HCT116 (cell line): ENCODE measurements at regions of chr6 and their contacts with region 1.

Region 1: GRCh38 chr6:142474531-142475289 is 172.9 kb downstream of the ADGRG6 start:
- DNase-seq: peak; percentile 77
- ATAC-seq: peak; percentile 94
- H3K4me3 ChIP-seq: peak overlapping the region in 1 of 2 experiments; percentile 19; a peak in 1 of 4 replicates
- H3K27ac ChIP-seq: 0 out of 2 replicates have a peak overlapping the region, but pooled peaks have one; percentile 10
- H3K4me1 ChIP-seq: peaks cover 0 to 9% of the 10 kb centered on the region in 2 experiments; a peak in 2 of 4 replicates
- H3K27me3 ChIP-seq: no peaks in the 10 kb centered on the region
- CTCF ChIP-seq: peak; percentile 52 to 89 (median 83)
- POLR2A ChIP-seq: no peak
- RAD21 ChIP-seq: peak; percentile 83

Region 2: DNA sequence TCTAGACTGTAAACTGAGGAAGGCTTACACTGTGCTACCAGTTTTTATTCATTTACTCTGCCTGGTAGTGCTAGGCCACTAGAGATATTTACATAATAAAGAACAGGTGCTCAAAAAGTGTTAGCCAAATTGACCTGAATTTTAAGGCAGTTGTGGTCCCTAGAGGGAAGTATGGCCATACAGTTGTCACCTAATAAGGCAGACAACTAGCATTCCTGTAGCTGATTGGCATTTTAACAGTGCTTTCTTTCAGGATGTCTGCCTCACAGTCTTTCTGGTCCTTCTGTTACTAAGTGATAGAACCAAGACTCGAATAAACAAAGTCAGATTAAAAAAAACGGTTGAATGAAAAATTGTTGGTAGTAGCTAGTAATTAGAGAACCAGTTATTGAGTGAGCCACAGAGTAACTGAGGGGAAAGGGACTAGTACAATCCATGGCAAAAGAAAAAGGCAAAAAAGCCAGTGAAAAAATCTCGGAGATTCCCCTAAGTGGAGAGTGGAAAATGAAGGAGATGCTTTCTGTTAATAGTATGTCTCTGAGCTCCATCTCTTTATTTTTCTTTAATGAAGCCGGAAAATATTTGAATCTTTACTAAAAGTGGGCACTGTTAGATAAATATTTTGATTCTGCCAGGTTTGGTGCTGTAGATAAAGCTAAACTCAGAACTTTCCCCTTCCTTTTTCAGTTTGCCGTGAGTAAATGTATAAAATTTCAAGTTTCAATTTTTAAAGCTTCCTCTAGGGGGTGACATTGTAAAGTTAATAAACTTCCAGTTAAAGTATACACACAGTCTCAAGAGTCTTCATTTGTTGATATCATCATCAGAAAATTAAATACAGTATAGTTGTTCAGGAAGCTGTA is 318.6 kb before region 1 on chr6:
- CTCF ChIA-PET with region 1: interaction called, 21 read pairs
- POLR2A ChIA-PET with region 1: no interaction called
- RAD21 ChIA-PET with region 1: no interaction called
- intact Hi-C with region 1: loop called (anchors 5 kb)
- DNase-seq: peak; percentile 2
- ATAC-seq: peak; percentile 62; the same call in 1 of the 2 replicates
- H3K4me3 ChIP-seq: no peak overlapping the region
- H3K27ac ChIP-seq: no peak overlapping the region
- H3K4me1 ChIP-seq: no peaks in the 10 kb centered on the region
- H3K27me3 ChIP-seq: no peaks in the 10 kb centered on the region
- CTCF ChIP-seq: peak in 2 of 3 experiments; percentile 50 to 58; a peak in 3 of 6 replicates
- POLR2A ChIP-seq: no peak
- RAD21 ChIP-seq: peak; percentile 57

Region 3: DNA sequence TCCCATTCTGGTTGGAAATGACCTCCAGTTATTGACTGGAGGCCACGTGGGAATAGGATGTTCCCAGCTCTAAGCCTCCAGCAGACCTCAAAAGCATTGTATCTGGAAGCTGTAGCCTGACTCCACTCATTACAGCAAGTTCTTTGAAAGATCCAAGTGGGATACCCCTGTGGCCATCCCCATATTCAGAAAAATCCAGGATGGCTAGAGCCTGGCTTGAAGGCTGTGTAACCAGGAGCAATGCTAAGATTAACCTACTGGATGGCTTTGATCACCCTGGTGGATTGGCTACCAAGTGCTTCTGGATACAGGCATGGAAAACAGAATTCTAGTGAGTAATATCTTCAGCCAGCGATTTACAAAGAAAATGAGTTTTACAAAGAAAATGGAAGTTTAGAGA is 21.7 kb before region 1 on chr6:
- CTCF ChIA-PET with region 1: no interaction called
- POLR2A ChIA-PET with region 1: no interaction called
- RAD21 ChIA-PET with region 1: no interaction called
- intact Hi-C with region 1: no loop called
- DNase-seq: no peak
- ATAC-seq: no peak
- H3K4me3 ChIP-seq: no peak overlapping the region
- H3K27ac ChIP-seq: no peak overlapping the region
- H3K4me1 ChIP-seq: no peaks in the 10 kb centered on the region
- H3K27me3 ChIP-seq: no peaks in the 10 kb centered on the region
- CTCF ChIP-seq: no peak
- POLR2A ChIP-seq: no peak
- RAD21 ChIP-seq: no peak

Region 4: DNA sequence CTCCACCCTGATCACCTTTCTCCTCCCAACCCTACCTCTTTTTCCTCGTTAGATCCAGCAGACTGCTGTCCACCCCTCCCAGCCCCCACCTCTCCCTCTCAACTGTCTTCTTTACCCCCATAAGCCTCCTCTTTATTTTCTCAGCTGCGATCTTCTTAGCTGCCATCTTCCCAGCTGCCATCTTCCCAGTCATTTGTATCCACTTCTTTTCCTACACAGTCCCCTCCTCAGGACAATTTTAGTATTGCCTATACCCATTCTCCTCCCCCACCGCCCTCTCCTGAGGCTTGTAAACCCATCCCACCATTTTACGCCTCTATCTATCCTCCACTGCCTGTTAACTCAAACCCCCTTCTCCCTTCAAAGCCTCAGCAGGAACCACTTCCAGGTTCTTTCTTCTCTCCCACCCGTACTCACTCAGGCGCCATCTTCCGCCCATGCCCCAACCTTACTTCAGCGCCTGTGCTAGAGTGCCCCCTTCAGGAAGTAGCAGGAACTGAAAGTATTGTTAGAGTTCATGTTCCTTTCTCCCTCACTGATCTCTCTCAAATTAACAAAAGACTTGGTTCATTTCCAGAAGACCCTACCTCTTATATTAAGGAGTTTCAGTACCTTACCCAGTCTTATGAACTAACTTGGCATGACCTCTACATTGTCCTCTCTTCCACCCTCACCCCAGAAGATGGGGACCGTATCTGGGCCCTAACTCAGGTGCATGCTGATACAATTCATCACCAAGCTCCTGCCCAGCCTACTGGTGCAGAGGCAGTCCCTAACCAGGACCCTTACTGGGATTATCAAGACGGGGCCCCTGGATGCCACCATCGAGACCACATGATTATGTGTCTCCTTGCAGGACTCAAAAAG is 63.1 kb after region 1 on chr6:
- CTCF ChIA-PET with region 1: interaction called, 40 read pairs
- POLR2A ChIA-PET with region 1: no interaction called
- RAD21 ChIA-PET with region 1: no interaction called
- intact Hi-C with region 1: loop called (anchors 1 kb)
- DNase-seq: peak; percentile 34
- ATAC-seq: peak; percentile 79
- H3K4me3 ChIP-seq: peak overlapping the region; percentile 15 to 38; a peak in 2 of 4 replicates
- H3K27ac ChIP-seq: no peak overlapping the region
- H3K4me1 ChIP-seq: peaks cover 2 to 10% of the 10 kb centered on the region in 2 experiments; a peak in 3 of 4 replicates
- H3K27me3 ChIP-seq: no peaks in the 10 kb centered on the region
- CTCF ChIP-seq: peak; percentile 81 to 86 (median 82)
- POLR2A ChIP-seq: no peak
- RAD21 ChIP-seq: peak; percentile 82

Region 5: DNA sequence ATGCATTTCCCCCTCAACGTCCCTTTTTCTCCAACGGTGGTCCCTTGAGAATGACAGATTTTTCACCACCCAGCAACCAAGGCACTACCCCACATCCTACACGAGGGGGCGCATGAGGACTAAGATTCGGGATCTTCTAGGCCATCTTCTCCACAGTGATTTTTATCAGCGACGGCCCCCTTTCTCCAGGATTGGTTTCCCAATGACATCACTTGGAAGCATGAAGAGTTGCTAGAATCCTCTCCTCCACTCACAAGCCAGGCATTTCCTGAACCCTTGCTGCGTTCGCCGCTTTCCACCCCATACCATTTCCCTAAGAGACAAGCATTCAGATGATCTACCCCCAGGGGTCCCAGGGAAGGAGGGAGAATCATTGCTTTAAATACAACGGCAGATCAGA is 218.2 kb after region 1 on chr6:
- CTCF ChIA-PET with region 1: interaction called, 15 read pairs
- POLR2A ChIA-PET with region 1: no interaction called
- RAD21 ChIA-PET with region 1: no interaction called
- intact Hi-C with region 1: loop called (anchors 1 kb)
- DNase-seq: peak; percentile 41
- ATAC-seq: peak; percentile 97
- H3K4me3 ChIP-seq: no peak overlapping the region
- H3K27ac ChIP-seq: no peak overlapping the region
- H3K4me1 ChIP-seq: 0 out of 4 replicates have a peak, but pooled peaks cover 0 to 2% of the 10 kb centered on the region in 2 experiments
- H3K27me3 ChIP-seq: no peaks in the 10 kb centered on the region
- CTCF ChIP-seq: peak; percentile 86 to 92 (median 87); a peak in 5 of 6 replicates
- POLR2A ChIP-seq: no peak
- RAD21 ChIP-seq: peak; percentile 96

Region 6: DNA sequence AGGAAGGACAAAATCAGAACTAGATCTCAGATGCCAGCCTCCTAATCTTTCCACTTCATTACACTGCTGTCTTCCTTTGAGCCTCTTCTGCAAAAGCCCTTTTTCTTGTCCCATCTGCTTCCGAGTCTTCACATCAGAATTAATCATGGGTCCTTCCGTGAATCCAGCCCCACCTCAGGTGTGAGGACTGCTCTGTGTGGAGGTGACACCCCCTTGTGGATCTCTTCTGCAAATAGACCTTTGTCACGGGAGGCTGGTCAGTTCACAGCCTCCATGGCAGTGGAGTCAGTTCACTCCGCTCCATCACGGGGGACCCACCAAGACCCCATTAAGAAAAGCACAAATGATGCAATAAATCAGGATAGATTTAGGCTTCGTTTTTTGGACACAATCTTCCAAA is 804.7 kb after region 1 on chr6:
- CTCF ChIA-PET with region 1: interaction called, 7 read pairs
- POLR2A ChIA-PET with region 1: no interaction called
- RAD21 ChIA-PET with region 1: no interaction called
- intact Hi-C with region 1: loop called (anchors 10 kb)
- DNase-seq: peak; percentile 13
- ATAC-seq: peak; percentile 92
- H3K4me3 ChIP-seq: no peak overlapping the region
- H3K27ac ChIP-seq: no peak overlapping the region
- H3K4me1 ChIP-seq: no peaks in the 10 kb centered on the region
- H3K27me3 ChIP-seq: no peaks in the 10 kb centered on the region
- CTCF ChIP-seq: peak; percentile 46 to 59 (median 48); a peak in 5 of 6 replicates
- POLR2A ChIP-seq: no peak
- RAD21 ChIP-seq: peak; percentile 81

Region 7: GRCh38 chr6:144013486-144013909 is 1538.8 kb after region 1 on chr6:
- CTCF ChIA-PET with region 1: interaction called, 3 read pairs
- POLR2A ChIA-PET with region 1: no interaction called
- RAD21 ChIA-PET with region 1: no interaction called
- intact Hi-C with region 1: loop called (anchors 1 kb)
- DNase-seq: peak; percentile 73
- ATAC-seq: peak; percentile 79
- H3K4me3 ChIP-seq: no peak overlapping the region
- H3K27ac ChIP-seq: no peak overlapping the region
- H3K4me1 ChIP-seq: 0 out of 4 replicates have a peak, but pooled peaks cover 0 to 3% of the 10 kb centered on the region in 2 experiments
- H3K27me3 ChIP-seq: no peaks in the 10 kb centered on the region
- CTCF ChIP-seq: peak; percentile 86 to 90 (median 89)
- POLR2A ChIP-seq: no peak
- RAD21 ChIP-seq: peak; percentile 96